Activated CD8-positive, alpha-beta T cell treated with anti-CD3 and anti-CD28 coated beads for 36 hours (primary cell): ENCODE measurements at regions of chr2 and their contacts with region 1.

Region 1: DNA sequence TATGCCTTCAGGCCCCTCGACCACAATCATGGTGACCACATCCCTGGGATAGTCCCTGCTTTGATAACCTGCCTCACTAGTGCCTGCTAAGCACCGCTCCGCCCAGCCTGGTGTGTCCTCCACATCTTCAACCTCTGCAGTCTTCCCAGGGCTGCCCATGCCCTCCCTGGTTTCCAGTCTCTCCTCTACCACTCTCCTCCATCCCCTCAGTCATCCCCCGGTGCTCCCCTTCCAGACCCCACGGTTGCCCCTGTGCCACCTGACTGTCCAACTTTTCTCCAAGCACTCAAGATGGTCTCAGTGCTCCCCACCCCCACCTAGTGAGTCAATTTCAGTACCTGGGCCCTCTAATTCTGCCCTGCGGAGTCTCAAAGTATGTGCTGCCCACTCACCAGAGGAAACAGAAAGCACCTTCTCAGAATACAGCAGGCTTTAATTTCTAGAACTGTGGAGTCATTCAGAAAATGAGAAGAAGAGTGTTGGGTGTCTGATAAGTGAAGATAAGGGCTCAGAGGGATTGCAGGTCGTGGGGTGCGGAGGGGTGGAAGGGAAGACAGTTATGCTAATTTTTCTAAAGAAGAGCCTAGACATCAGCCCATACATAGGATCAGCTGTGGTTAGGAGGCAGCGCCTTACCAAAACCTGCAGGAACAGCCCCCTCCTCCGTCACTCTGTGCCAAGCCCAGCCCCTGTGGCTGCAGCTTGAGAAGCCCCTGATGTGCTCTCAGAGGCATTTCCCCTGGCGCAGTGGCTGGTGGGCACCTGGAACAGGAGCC is 53.6 kb upstream of the CAB39 start:
- DNase-seq: peak; percentile 92
- ATAC-seq: peak; percentile 71
- H3K4me3 Mint-ChIP-seq: peak overlapping the region; percentile 71
- H3K27ac Mint-ChIP-seq: peak overlapping the region; percentile 97
- H3K4me1 Mint-ChIP-seq: peaks cover 95% of the 10 kb centered on the region
- H3K27me3 Mint-ChIP-seq: no peaks in the 10 kb centered on the region
- CTCF ChIP-seq: no peak

Region 2: GRCh38 chr2:230557065-230557464 is 102.0 kb before region 1 on chr2:
- CTCF ChIA-PET with region 1: no interaction called
- POLR2A ChIA-PET with region 1: no interaction called
- intact Hi-C with region 1: no loop called
- DNase-seq: no peak
- ATAC-seq: no peak
- H3K4me3 Mint-ChIP-seq: no peak overlapping the region
- H3K27ac Mint-ChIP-seq: no peak overlapping the region
- H3K4me1 Mint-ChIP-seq: peaks cover 6% of the 10 kb centered on the region
- H3K27me3 Mint-ChIP-seq: no peaks in the 10 kb centered on the region
- CTCF ChIP-seq: no peak

Region 3: GRCh38 chr2:230643576-230644291 is 15.3 kb before region 1 on chr2:
- CTCF ChIA-PET with region 1: interaction called, 15 read pairs
- POLR2A ChIA-PET with region 1: interaction called, 54 read pairs
- intact Hi-C with region 1: loop called (anchors 1 kb)
- DNase-seq: peak; percentile 91
- ATAC-seq: peak; percentile 92
- H3K4me3 Mint-ChIP-seq: peak overlapping the region; percentile 34
- H3K27ac Mint-ChIP-seq: peak overlapping the region; percentile 97
- H3K4me1 Mint-ChIP-seq: peaks cover 38% of the 10 kb centered on the region
- H3K27me3 Mint-ChIP-seq: no peaks in the 10 kb centered on the region
- CTCF ChIP-seq: no peak

Region 4: DNA sequence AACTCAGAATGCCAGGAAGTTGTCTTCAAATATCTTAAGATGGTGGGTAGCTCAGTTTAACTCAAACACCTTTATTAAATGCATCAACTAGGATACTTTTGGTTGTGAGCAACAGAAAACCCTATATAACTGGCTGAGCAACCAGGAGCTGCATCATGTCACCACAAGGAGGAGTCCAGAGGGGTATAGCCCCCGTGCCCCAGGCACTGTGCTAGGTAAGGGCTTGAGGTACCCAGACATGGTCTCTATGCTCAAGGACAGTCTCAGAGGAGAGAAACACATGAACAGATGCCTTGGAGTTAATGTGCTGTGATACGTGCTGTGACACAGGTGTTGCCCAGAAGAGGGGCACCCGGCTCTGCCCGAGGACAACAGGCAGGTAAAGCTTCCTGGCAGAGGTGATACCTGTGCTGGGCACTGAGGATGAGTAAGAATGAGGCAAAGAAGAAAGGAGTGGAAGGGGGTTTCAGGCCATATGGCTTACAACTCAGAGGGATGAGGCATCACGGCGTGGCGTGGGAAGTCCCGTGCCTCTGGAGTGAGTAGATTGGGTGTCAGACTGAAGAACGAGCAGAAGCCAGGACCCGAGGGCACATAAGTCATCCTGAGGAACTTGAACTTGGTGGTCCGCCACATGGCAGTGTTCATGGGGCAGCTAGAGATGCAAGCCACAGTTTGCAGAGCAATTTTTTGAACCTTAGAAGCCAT is 21.6 kb after region 1 on chr2:
- CTCF ChIA-PET with region 1: interaction called, 11 read pairs
- POLR2A ChIA-PET with region 1: interaction called, 6 read pairs
- intact Hi-C with region 1: no loop called
- DNase-seq: peak; percentile 52
- ATAC-seq: peak; percentile 49
- H3K4me3 Mint-ChIP-seq: no peak overlapping the region
- H3K27ac Mint-ChIP-seq: no peak overlapping the region
- H3K4me1 Mint-ChIP-seq: peaks cover 37% of the 10 kb centered on the region
- H3K27me3 Mint-ChIP-seq: no peaks in the 10 kb centered on the region
- CTCF ChIP-seq: no peak